GM13976 (cell line): ENCODE measurements at regions of chr12 and their contacts with region 1.

Region 1: GRCh38 chr12:124044809-124045321 is 71.8 kb downstream of the ZNF664 start:
- DNase-seq: no peak
- CTCF ChIP-seq: no peak

Region 2: DNA sequence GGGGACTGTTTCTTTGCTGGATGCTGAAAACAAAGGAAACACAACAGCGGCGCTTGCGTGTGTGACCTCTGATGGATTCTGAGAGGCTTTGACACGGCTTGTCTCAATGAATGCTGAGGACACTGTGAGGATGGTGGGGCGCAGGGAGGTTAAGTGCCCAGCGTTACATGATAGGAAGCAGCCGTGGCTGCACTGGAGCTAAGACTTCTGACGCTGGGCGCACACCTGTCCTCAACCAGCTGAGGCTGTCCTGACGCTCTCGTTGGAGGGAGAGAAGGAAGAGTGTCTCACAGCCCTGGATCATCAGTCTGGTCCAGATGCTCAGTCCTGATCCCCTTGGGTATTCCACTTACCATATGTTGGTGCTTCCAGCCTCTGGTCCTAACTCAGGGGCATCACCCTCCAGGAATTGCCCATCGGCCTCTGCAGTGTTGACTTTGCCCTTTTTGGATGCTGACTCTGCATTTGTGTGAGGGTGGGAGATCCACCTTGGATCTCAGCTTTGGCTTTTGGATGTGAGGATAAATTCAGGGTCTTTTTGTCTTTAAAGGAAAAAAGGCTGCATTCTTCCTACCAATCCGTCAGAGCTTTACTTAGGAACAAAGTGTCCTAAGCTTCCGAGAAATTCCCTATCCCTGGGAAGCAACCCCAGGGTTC is 53.4 kb after region 1 on chr12:
- in situ Hi-C with region 1: no loop called
- DNase-seq: no peak
- CTCF ChIP-seq: no peak

Region 3: GRCh38 chr12:124311292-124312109 is 266.6 kb after region 1 on chr12:
- in situ Hi-C with region 1: loop called (anchors 5 kb)
- DNase-seq: no peak
- CTCF ChIP-seq: no peak

Region 4: DNA sequence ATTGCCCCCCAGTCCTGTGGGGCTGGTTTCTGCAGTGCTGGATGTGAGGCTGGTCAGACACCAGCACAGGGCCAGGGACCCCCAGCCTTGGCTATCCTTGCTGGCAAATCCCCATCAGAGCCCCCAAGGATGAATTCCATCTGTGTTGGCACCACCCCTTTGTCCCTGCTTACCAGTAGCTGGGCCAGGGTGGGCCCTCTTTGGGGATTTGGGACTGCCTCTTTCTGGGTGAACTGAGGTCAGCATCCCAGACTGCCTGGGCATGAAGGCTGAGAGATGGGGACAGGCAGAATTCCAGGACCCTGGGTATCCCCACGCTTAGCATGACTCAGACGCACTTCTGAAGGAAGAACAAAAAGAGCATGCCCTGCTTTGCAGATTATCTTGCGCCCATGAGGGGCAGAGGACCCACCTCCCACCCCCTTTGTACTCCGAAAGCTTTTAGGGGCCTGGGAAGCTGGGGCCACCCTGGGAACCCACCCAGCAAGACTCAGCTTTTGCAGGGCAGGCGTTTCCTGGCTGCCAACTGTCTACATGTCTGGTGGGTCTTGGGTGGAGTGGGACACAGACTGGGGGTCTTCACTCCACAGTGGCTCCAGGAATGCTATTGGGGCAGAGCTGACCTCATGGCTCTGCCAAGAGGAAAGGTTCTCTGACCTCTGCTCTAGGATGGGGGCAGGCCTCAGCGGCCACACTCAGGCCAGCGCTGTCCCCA is 276.8 kb after region 1 on chr12:
- in situ Hi-C with region 1: no loop called
- DNase-seq: no peak
- CTCF ChIP-seq: no peak